ENCODE measurements at regions of chr16 and their contacts with region 1.

Region 1: DNA sequence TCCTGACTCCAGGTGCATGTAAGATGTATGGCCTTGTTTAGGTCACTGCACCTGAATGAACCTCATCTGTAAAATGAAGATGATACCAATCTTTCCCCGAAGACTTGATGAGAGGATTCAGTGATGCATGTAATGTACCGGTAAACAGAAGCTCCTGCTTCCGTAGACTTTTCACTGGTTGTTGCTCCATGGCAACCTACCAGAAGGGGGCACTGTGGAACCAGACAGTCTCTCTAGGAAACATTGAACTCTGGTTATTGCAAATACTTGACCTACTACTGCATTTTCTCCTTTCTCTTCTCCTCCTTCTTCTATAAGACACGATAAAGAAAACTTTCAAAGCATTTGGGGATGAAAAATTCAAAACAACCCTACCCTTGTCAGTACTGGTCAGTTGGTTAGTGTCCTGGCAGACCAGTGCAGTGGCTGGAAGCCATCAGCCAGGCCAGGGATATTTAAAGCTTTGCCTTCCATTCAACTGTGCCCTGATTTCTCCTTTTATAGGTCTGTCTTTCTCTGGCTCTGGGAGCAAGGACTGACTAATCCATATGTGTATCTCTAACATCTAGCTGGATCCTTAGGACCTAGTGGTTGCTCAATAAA is 667.4 kb upstream of the SALL1 start:
- DNase-seq: no peak
- H3K4me3 ChIP-seq: no peak overlapping the region
- H3K27me3 ChIP-seq: no peaks in the 10 kb centered on the region
- CTCF ChIP-seq: peak; percentile 83

Region 2: GRCh38 chr16:51756447-51757123 is 61.9 kb before region 1 on chr16:
- CTCF ChIA-PET with region 1: no interaction called
- POLR2A ChIA-PET with region 1: no interaction called
- DNase-seq: no peak
- H3K4me3 ChIP-seq: no peak overlapping the region
- H3K27me3 ChIP-seq: no peaks in the 10 kb centered on the region
- CTCF ChIP-seq: no peak

Region 3: GRCh38 chr16:51834133-51834532 is 15.7 kb after region 1 on chr16:
- CTCF ChIA-PET with region 1: interaction called, 22 read pairs
- POLR2A ChIA-PET with region 1: no interaction called
- DNase-seq: no peak
- H3K4me3 ChIP-seq: no peak overlapping the region
- H3K27me3 ChIP-seq: no peaks in the 10 kb centered on the region
- CTCF ChIP-seq: no peak

Region 4: GRCh38 chr16:51971184-51971583 is 152.7 kb after region 1 on chr16:
- CTCF ChIA-PET with region 1: interaction called, 51 read pairs
- POLR2A ChIA-PET with region 1: no interaction called
- DNase-seq: no peak
- H3K4me3 ChIP-seq: no peak overlapping the region
- H3K27me3 ChIP-seq: no peaks in the 10 kb centered on the region
- CTCF ChIP-seq: peak; percentile 43; the same call in 1 of the 2 replicates

Region 5: DNA sequence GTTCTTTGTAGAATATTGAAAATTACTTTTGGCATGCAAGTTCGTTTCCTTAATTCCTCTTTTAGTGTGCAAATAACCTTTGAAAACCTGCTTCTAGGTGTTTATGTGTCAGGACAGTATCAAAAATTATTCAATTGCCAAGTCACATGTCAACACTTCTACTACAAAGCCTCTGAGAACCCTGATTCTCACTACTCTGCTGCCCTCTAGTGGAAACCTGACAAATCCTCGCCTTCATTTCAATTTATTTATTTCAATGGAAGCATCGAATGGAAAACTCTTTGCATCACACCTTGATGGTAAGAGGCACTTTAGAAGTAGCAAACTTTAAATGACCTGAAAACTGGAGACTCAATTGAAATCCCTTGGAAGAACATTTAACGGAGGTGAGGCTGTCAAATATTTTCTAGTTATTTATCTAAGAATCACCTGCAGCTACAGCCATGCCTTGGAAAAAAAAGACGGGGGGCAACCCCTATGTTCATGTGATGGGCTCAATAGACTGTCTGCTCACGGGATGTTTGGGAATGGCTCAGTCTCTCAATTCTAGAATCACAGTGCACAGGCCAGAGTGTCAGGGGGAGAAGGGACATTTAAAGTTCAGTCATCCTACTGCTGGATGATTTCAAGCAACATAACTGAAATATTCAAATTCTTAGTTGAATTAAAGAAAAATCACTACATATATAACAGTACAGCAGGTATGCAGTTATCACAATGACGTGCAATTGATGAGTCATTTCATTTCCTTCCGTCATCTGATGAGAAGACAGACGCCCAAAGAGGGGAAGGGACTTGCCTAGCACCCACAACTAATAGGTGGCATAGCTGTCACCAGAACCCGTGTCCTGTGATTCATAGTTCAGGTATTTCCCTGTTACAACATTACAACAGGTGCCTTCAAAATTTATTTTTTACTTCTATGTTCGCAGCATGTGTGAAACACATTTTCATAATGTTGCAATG is 164.6 kb after region 1 on chr16:
- CTCF ChIA-PET with region 1: interaction called, 116 read pairs
- POLR2A ChIA-PET with region 1: no interaction called
- DNase-seq: no peak
- H3K4me3 ChIP-seq: no peak overlapping the region
- H3K27me3 ChIP-seq: no peaks in the 10 kb centered on the region
- CTCF ChIP-seq: peak; percentile 69